H1 (cell line): ENCODE measurements at regions of chr1 and their contacts with region 1.

Region 1: DNA sequence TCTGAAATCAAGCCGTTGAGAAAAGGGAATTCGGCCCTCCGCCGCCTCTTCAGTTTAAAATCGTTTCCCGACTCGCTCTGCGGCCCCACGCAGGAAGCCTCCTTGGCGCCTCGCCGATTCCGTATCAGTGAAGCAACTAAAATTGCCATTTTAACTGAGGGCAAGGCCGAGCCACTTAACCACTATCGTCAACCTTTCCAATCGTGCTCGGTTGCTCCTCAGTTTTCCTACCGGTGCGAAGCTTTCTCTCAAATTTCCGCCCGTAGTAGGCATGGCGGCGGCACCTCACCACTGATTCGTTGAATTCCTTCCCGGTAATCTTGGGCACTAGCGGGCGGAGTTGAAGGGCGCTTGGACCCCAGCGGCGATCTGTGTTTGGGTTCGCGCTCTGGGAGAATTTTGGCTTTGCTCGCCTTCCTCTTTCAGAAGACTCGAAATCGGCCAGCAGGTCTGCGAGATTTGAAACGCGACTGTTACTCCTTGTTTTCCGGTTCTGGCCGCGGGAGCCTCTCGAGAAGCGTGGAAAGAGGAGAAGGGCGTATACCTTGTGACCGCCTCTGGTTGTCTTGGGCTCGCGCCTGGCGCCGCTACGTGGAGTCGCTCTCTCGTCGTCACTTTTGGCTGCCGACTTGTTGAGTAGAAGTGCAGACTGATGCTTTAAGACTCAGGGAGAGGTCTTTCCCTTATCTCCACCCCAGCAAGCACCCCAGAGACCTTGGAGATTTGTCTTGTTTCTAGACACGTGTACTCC is at the starts of genes CENPL and DARS2:
- DNase-seq: peak; percentile 88 to 89
- H3K4me3 ChIP-seq: peak within 1 kb of the TSS; percentile 69 to 96 (median 88)
- H3K27ac ChIP-seq: peak within 1 kb of the TSS; percentile 94
- H3K4me1 ChIP-seq: no peaks in the 10 kb centered on the region; a peak in 3 of 7 replicates
- H3K27me3 ChIP-seq: no peaks in the 10 kb centered on the region
- CTCF ChIP-seq: no peak
- EP300 ChIP-seq: no peak
- POLR2A ChIP-seq: peak; percentile 63 to 85
- RAD21 ChIP-seq: no peak
- total RNA-seq, gene CENPL: 16.0 and 16.3 TPM in 2 replicates
- total RNA-seq, gene DARS2: 35.2 and 35.7 TPM in 2 replicates

Region 2: GRCh38 chr1:173714759-173715537 is 109.6 kb before region 1 on chr1 and contains the start of gene KLHL20:
- CTCF ChIA-PET with region 1: no interaction called
- POLR2A ChIA-PET with region 1: interaction called, 12 read pairs
- DNase-seq: peak; percentile 51 to 88
- H3K4me3 ChIP-seq: peak within 1 kb of the TSS; percentile 73 to 97 (median 83)
- H3K27ac ChIP-seq: no peak within 1 kb of the TSS; the same call in 1 of the 2 replicates
- H3K4me1 ChIP-seq: no peaks in the 10 kb centered on the region
- H3K27me3 ChIP-seq: peaks cover 0 to 7% (median 0%) of the 10 kb centered on the region in 4 experiments; a peak in 2 of 7 replicates
- CTCF ChIP-seq: no peak
- EP300 ChIP-seq: peak in 1 of 2 experiments; percentile 68; a peak in 1 of 3 replicates
- POLR2A ChIP-seq: peak in 1 of 2 experiments; percentile 71; a peak in 2 of 3 replicates
- RAD21 ChIP-seq: peak; percentile 5 to 30; a peak in 2 of 4 replicates
- total RNA-seq, gene KLHL20: 12.3 and 12.8 TPM in 2 replicates